Posterior cingulate gyrus (tissue), 11 donors: ENCODE measurements at regions of chr21 and their contacts with region 1.

Region 1: DNA sequence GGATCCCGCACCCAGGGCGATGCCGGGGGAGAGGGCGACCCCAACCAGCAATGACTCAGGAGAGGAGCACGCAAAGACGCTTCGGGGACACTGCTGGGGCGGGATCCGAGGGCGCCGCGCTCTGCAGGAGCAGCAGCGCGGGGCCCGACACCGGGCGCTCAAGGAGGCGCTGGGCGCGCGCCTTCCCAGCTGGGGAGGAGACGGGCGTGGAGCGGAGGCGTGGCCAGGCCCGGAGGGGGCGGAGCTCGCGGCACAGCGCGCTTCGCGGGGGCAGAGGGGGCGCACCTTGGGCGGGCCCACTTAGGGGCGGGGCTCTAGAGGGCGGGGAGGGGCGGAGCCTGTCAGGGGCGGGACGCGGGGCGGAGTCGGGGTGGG is 369 bp downstream of the SUMO3 start:
- DNase-seq: peak; percentile 79 to 99 (median 90)

Region 2: GRCh38 chr21:44801468-44802395 is 15.8 kb before region 1 on chr21 and contains the start of gene UBE2G2:
- intact Hi-C with region 1: loop called (anchors 2 kb)
- DNase-seq: peak; percentile 73 to 97 (median 82)

Region 3: GRCh38 chr21:44873356-44874239 is 56.1 kb after region 1 on chr21 and contains the start of gene PTTG1IP:
- intact Hi-C with region 1: loop called (anchors 5 kb)
- DNase-seq: peak; percentile 94 to 99 (median 96)

Region 4: GRCh38 chr21:45074048-45074817 is 256.7 kb after region 1 on chr21 and contains the start of gene ADARB1:
- intact Hi-C with region 1: loop called (anchors 10 kb)
- DNase-seq: peak; percentile 37 to 94 (median 65)